Common myeloid progenitor, CD34-positive (primary cell): ENCODE measurements at regions of chr18 and their contacts with region 1.

Region 1: DNA sequence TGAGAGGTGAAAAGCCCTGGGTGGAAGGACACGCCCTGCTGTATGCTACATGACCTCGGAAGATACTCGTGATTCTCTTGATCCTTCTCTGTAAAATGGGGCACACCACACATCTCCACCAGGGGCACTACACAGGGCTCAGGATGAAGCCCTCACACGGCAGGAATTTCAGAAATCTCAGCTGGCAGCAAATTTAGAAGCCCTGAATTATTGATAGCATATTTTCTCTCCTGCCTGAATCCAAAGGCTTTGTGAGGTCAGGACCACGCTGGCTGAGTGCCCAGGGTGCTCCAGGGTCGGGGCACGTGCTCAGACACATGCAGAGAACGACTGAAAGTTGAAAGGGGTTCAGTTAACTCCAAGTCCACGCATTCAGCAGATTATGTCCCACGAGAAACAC is 42.1 kb upstream of the GALR1 start:
- DNase-seq: peak; percentile 59 to 77 (median 70)
- H3K4me3 ChIP-seq: no peak overlapping the region
- H3K27ac ChIP-seq: no peak overlapping the region
- H3K4me1 ChIP-seq: peaks cover 11 to 37% (median 32%) of the 10 kb centered on the region in 4 experiments
- H3K27me3 ChIP-seq: no peaks in the 10 kb centered on the region

Region 2: GRCh38 chr18:77054606-77055428 is 152.7 kb before region 1 on chr18:
- CTCF ChIA-PET with region 1: interaction called, 24 read pairs
- POLR2A ChIA-PET with region 1: no interaction called
- DNase-seq: peak; percentile 93 to 96 (median 96)
- H3K4me3 ChIP-seq: peak overlapping the region in 6 of 7 experiments; percentile 3 to 47 (median 25)
- H3K27ac ChIP-seq: peak overlapping the region; percentile 83 to 90
- H3K4me1 ChIP-seq: peaks cover 31 to 77% (median 69%) of the 10 kb centered on the region in 4 experiments
- H3K27me3 ChIP-seq: no peaks in the 10 kb centered on the region

Region 3: GRCh38 chr18:77087393-77088141 is 120.0 kb before region 1 on chr18:
- CTCF ChIA-PET with region 1: interaction called, 18 read pairs
- POLR2A ChIA-PET with region 1: no interaction called
- DNase-seq: no peak
- H3K4me3 ChIP-seq: no peak overlapping the region
- H3K27ac ChIP-seq: no peak overlapping the region
- H3K4me1 ChIP-seq: peaks cover 0 to 16% (median 11%) of the 10 kb centered on the region in 4 experiments
- H3K27me3 ChIP-seq: no peaks in the 10 kb centered on the region

Region 4: DNA sequence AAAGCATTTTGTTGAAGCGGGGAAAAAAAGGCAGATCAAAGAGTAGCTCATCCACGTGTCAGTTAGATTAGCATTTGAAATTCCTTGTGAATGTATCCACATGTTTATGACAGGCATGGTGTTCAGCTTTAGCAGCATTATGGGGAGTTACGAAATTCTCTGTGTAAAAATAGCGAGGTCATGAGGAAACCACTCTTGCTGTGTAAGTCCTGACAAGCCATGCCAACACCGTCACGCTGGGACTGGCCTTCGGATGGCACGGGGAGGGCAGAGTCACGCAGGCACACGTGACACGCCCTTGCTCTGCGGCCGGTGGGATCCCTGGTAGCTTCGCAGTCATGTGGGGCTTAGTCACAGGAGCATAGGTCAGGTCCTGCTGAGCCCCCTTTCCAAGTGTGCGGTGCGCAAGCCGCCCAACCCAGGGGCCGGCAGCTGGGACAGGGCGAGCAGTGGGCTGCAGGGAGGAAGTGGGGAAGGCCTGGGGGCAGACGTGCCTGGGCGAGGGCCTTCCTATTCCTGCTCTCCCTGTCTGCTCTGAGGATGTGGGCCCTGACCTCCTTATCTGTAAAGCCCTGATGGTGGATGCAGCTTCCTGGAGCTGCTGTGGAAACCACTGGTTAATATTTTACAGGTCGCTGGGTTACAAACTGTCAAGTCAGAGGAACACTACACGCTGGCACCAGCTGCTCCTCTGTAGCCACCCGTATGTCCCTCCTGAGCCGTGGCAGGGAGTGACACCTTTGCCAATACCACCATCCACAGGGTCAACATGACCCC is 92.9 kb before region 1 on chr18:
- CTCF ChIA-PET with region 1: interaction called, 21 read pairs
- POLR2A ChIA-PET with region 1: interaction called, 10 read pairs
- DNase-seq: peak; percentile 98 to 100 (median 99)
- H3K4me3 ChIP-seq: peak overlapping the region in 4 of 7 experiments; percentile 33 to 43 (median 37)
- H3K27ac ChIP-seq: peak overlapping the region; percentile 86 to 92
- H3K4me1 ChIP-seq: peaks cover 23 to 96% (median 89%) of the 10 kb centered on the region in 4 experiments
- H3K27me3 ChIP-seq: no peaks in the 10 kb centered on the region

Region 5: GRCh38 chr18:77132371-77133050 is 75.0 kb before region 1 on chr18 and contains the start of gene MBP:
- CTCF ChIA-PET with region 1: interaction called, 18 read pairs
- POLR2A ChIA-PET with region 1: interaction called, 4 read pairs
- DNase-seq: peak in 1 of 3 donors; percentile 60
- H3K4me3 ChIP-seq: peak within 1 kb of the TSS; percentile 62 to 86 (median 78)
- H3K27ac ChIP-seq: peak within 1 kb of the TSS; percentile 72 to 87
- H3K4me1 ChIP-seq: peaks cover 22 to 73% (median 61%) of the 10 kb centered on the region in 4 experiments
- H3K27me3 ChIP-seq: no peaks in the 10 kb centered on the region